CD4-positive, alpha-beta memory T cell (primary cell): ENCODE measurements at regions of chr6 and their contacts with region 1.

Region 1: GRCh38 chr6:13873285-13874190 is 51.2 kb upstream of the RNF182 start:
- DNase-seq: peak; percentile 52 to 64 (median 56)
- H3K4me3 ChIP-seq: peak overlapping the region; percentile 15 to 60
- H3K4me3 Mint-ChIP-seq: peak overlapping the region; percentile 75 to 93 (median 88)
- H3K27ac ChIP-seq: no peak overlapping the region
- H3K27ac Mint-ChIP-seq: peak overlapping the region in 5 of 7 donors; percentile 11 to 69 (median 65)
- H3K4me1 ChIP-seq: peaks cover 13% of the 10 kb centered on the region
- H3K4me1 Mint-ChIP-seq: peaks cover 8 to 18% (median 9%) of the 10 kb centered on the region in 4 donors
- H3K27me3 ChIP-seq: no peaks in the 10 kb centered on the region
- H3K27me3 Mint-ChIP-seq: peaks cover 4 to 9% of the 10 kb centered on the region in 2 donors

Region 2: GRCh38 chr6:13487122-13488014 is 386.2 kb before region 1 on chr6 and contains the start of gene GFOD1:
- CTCF ChIA-PET with region 1: no interaction called
- POLR2A ChIA-PET with region 1: no interaction called
- intact Hi-C with region 1: no loop called
- DNase-seq: peak; percentile 55 to 68 (median 61)
- H3K4me3 ChIP-seq: peak within 1 kb of the TSS; percentile 67 to 69
- H3K4me3 Mint-ChIP-seq: peak within 1 kb of the TSS; percentile 88 to 94 (median 92)
- H3K27ac ChIP-seq: peak within 1 kb of the TSS; percentile 4
- H3K27ac Mint-ChIP-seq: peak within 1 kb of the TSS; percentile 42 to 78 (median 73)
- H3K4me1 ChIP-seq: peaks cover 12% of the 10 kb centered on the region
- H3K4me1 Mint-ChIP-seq: peaks cover 16 to 36% (median 30%) of the 10 kb centered on the region in 4 donors
- H3K27me3 ChIP-seq: no peaks in the 10 kb centered on the region
- H3K27me3 Mint-ChIP-seq: peaks cover 5 to 6% of the 10 kb centered on the region in 2 donors
- total RNA-seq, gene GFOD1: 0.97 to 1.1 TPM

Region 3: GRCh38 chr6:13754644-13755043 is 118.9 kb before region 1 on chr6:
- CTCF ChIA-PET with region 1: no interaction called
- POLR2A ChIA-PET with region 1: no interaction called
- intact Hi-C with region 1: no loop called
- DNase-seq: no peak
- H3K4me3 ChIP-seq: no peak overlapping the region
- H3K4me3 Mint-ChIP-seq: no peak overlapping the region
- H3K27ac ChIP-seq: no peak overlapping the region
- H3K27ac Mint-ChIP-seq: no peak overlapping the region
- H3K4me1 ChIP-seq: no peaks in the 10 kb centered on the region
- H3K4me1 Mint-ChIP-seq: peaks cover 0 to 7% (median 2%) of the 10 kb centered on the region in 4 donors
- H3K27me3 ChIP-seq: no peaks in the 10 kb centered on the region
- H3K27me3 Mint-ChIP-seq: no peaks in the 10 kb centered on the region

Region 4: GRCh38 chr6:13883966-13884365 is 10.4 kb after region 1 on chr6:
- CTCF ChIA-PET with region 1: interaction called, 16 read pairs
- POLR2A ChIA-PET with region 1: no interaction called
- intact Hi-C with region 1: no loop called
- DNase-seq: no peak
- H3K4me3 ChIP-seq: no peak overlapping the region
- H3K4me3 Mint-ChIP-seq: no peak overlapping the region
- H3K27ac ChIP-seq: no peak overlapping the region
- H3K27ac Mint-ChIP-seq: no peak overlapping the region
- H3K4me1 ChIP-seq: no peaks in the 10 kb centered on the region
- H3K4me1 Mint-ChIP-seq: no peaks in the 10 kb centered on the region
- H3K27me3 ChIP-seq: no peaks in the 10 kb centered on the region
- H3K27me3 Mint-ChIP-seq: peaks cover 0 to 3% of the 10 kb centered on the region in 2 donors

Region 5: DNA sequence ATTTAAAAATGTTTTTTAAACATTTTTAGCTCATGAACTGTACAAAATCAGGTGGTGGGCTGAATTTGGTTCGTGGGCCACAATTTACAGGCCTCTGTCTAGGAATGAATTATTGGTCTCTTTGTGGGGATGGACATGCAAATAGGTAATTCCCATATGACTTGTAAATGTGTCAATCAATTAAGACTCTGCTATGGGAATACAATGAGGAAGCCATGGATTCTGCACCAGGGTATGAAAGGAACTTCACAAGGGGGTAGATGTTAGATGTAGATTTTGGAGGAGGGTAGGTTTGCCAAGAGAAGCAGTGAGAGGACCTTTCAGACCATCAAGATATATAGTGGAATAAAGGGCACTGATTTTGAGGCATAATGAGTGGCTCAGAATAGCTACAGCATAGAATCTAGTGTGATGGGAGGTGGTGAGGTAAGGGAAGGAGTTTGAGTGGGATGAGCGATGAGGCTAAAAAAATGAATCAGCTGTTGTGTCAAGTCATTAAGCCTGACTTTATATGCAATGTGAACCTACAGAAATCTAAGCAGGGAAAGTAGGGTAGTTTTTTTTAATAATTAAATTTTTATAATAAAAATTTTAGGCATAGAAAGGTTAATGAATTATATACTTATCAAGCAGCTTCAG is 18.6 kb after region 1 on chr6:
- CTCF ChIA-PET with region 1: interaction called, 16 read pairs
- POLR2A ChIA-PET with region 1: no interaction called
- intact Hi-C with region 1: no loop called
- DNase-seq: no peak
- H3K4me3 ChIP-seq: no peak overlapping the region
- H3K4me3 Mint-ChIP-seq: no peak overlapping the region
- H3K27ac ChIP-seq: no peak overlapping the region
- H3K27ac Mint-ChIP-seq: peak overlapping the region in 1 of 7 donors; percentile 5
- H3K4me1 ChIP-seq: no peaks in the 10 kb centered on the region
- H3K4me1 Mint-ChIP-seq: no peaks in the 10 kb centered on the region
- H3K27me3 ChIP-seq: no peaks in the 10 kb centered on the region
- H3K27me3 Mint-ChIP-seq: peaks cover 6 to 9% of the 10 kb centered on the region in 2 donors

Region 6: DNA sequence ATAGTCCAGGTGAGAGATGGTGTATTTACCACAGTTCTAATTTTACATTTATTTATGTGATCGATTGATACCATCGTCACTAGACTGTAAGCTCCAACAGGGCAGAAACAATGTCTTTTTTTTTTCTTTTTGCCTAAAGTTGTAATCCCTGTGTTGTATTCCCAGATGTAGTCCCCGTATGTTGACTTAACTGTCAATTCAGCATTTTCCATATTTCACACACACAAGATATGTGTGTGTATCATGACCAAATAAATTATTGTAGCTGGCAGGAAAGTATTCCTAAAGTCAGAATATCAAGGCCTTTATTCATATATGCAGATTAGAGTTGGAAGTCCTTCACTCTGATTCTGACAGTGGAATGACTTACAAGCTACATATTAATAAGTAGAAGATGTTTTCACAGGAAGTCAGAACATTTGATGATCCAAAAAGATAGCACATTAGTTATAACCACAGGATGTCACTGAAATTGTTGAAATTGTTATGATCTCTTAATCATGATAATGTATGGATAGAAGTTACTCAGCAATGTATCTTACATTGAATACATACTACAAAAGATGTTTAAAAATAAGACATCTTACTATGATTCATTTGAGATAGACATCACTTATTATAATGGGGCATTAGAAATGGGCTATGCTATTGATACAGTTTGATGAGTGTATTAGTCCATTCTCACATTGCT is 61.8 kb after region 1 on chr6:
- CTCF ChIA-PET with region 1: no interaction called
- POLR2A ChIA-PET with region 1: no interaction called
- intact Hi-C with region 1: no loop called
- DNase-seq: peak in 1 of 5 donors; percentile 10
- H3K4me3 ChIP-seq: no peak overlapping the region
- H3K4me3 Mint-ChIP-seq: peak overlapping the region in 2 of 8 donors; percentile 6 to 8
- H3K27ac ChIP-seq: no peak overlapping the region
- H3K27ac Mint-ChIP-seq: peak overlapping the region in 1 of 7 donors; percentile 74
- H3K4me1 ChIP-seq: peaks cover 15% of the 10 kb centered on the region
- H3K4me1 Mint-ChIP-seq: peaks cover 12 to 17% (median 16%) of the 10 kb centered on the region in 4 donors
- H3K27me3 ChIP-seq: peaks cover 10% of the 10 kb centered on the region
- H3K27me3 Mint-ChIP-seq: peaks cover 12 to 15% of the 10 kb centered on the region in 2 donors